ENCODE measurements at regions of chr2 and their contacts with region 1.

Region 1: GRCh38 chr2:174465327-174465726 is 21.5 kb downstream of the GPR155 start:
- DNase-seq: no peak
- H3K4me3 ChIP-seq: no peak overlapping the region
- H3K27ac ChIP-seq: no peak overlapping the region
- H3K4me1 ChIP-seq: no peaks in the 10 kb centered on the region
- H3K27me3 ChIP-seq: 0 out of 7 replicates have a peak, but pooled peaks cover 0 to 2% (median 0%) of the 10 kb centered on the region in 4 experiments
- CTCF ChIP-seq: peak; percentile 17 to 38 (median 28); a peak in 3 of 4 replicates
- EP300 ChIP-seq: no peak
- POLR2A ChIP-seq: no peak
- RAD21 ChIP-seq: peak; percentile 22 to 48; a peak in 2 of 4 replicates

Region 2: DNA sequence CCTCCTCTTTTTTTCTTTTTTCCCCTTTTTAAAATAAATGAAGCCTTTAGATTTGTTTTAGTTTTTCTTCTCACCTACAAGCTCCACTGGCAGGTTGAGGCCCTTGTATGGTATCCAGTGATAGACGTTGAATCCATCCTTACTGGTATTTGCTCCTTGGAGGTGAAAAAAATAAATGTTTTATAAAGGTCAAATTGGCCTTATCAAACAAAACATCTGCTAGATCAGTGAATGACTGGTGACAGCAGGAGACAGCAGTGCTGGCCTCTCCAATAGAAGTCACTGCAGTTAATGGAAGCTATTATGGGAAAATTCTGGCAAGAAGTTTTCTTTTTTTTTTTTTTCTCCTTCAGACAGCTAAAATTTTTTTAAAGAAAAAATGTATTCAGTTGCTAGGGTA is 143.2 kb before region 1 on chr2:
- CTCF ChIA-PET with region 1: no interaction called
- POLR2A ChIA-PET with region 1: no interaction called
- DNase-seq: no peak
- H3K4me3 ChIP-seq: no peak overlapping the region
- H3K27ac ChIP-seq: no peak overlapping the region
- H3K4me1 ChIP-seq: peaks cover 0 to 7% (median 4%) of the 10 kb centered on the region in 4 experiments; a peak in 6 of 7 replicates
- H3K27me3 ChIP-seq: peaks cover 8 to 31% (median 20%) of the 10 kb centered on the region in 4 experiments
- CTCF ChIP-seq: no peak
- EP300 ChIP-seq: no peak
- POLR2A ChIP-seq: no peak
- RAD21 ChIP-seq: no peak

Region 3: DNA sequence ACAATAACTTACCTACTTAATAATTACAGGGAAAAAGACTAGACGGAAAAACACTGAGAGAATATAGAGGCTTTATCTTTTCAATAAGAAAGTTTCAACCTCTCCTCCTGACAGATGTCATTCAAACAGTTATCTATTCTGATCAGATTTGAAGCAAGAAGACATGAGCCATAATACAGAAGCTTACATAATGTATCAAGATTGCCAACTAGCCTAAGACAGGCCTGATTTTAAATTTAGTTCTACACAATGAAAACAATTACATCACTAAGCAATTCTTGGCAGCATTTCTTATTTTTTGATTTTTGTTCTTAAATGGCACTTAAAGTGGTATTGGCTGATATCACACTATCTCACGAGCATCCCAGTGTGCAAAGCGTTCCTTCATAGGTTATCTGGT is 20.1 kb before region 1 on chr2:
- CTCF ChIA-PET with region 1: interaction called, 27 read pairs
- POLR2A ChIA-PET with region 1: interaction called, 3 read pairs
- DNase-seq: no peak
- H3K4me3 ChIP-seq: no peak overlapping the region
- H3K27ac ChIP-seq: no peak overlapping the region
- H3K4me1 ChIP-seq: no peaks in the 10 kb centered on the region
- H3K27me3 ChIP-seq: no peaks in the 10 kb centered on the region
- CTCF ChIP-seq: no peak
- EP300 ChIP-seq: no peak
- POLR2A ChIP-seq: no peak
- RAD21 ChIP-seq: no peak

Region 4: DNA sequence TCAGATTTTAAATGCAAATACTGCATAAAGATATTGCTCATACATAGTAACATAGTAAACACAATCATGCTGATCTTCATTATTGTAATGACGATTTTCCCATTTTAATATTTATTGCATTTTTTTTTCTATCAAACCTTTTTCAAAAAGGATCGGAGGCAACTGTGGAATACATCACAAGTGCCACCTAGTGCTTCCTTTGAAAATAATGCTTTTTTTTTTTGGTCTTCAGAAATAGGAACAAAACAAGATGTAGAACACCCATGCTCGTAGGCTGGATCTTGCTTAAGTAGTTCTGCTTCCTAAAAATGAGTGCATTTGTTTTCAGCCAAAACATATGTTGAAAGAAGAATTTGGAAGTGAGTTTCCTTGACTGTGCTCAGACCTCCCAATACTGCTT is 57.2 kb after region 1 on chr2:
- CTCF ChIA-PET with region 1: interaction called, 49 read pairs
- POLR2A ChIA-PET with region 1: no interaction called
- DNase-seq: no peak
- H3K4me3 ChIP-seq: no peak overlapping the region
- H3K27ac ChIP-seq: no peak overlapping the region
- H3K4me1 ChIP-seq: no peaks in the 10 kb centered on the region
- H3K27me3 ChIP-seq: no peaks in the 10 kb centered on the region
- CTCF ChIP-seq: no peak
- EP300 ChIP-seq: no peak
- POLR2A ChIP-seq: no peak
- RAD21 ChIP-seq: peak in 1 of 2 experiments; percentile 20; a peak in 2 of 4 replicates

Region 5: GRCh38 chr2:174561283-174561971 is 96.1 kb after region 1 on chr2:
- CTCF ChIA-PET with region 1: interaction called, 10 read pairs
- POLR2A ChIA-PET with region 1: no interaction called
- DNase-seq: no peak
- H3K4me3 ChIP-seq: no peak overlapping the region
- H3K27ac ChIP-seq: no peak overlapping the region
- H3K4me1 ChIP-seq: no peaks in the 10 kb centered on the region
- H3K27me3 ChIP-seq: no peaks in the 10 kb centered on the region
- CTCF ChIP-seq: no peak
- EP300 ChIP-seq: no peak
- POLR2A ChIP-seq: no peak
- RAD21 ChIP-seq: no peak

Region 6: GRCh38 chr2:174688079-174688478 is 222.8 kb after region 1 on chr2:
- CTCF ChIA-PET with region 1: interaction called, 13 read pairs
- POLR2A ChIA-PET with region 1: no interaction called
- DNase-seq: no peak
- H3K4me3 ChIP-seq: no peak overlapping the region
- H3K27ac ChIP-seq: no peak overlapping the region
- H3K4me1 ChIP-seq: peaks cover under 1 to 6% (median 2%) of the 10 kb centered on the region in 4 experiments; a peak in 4 of 7 replicates
- H3K27me3 ChIP-seq: peaks cover 0 to 11% (median 5%) of the 10 kb centered on the region in 4 experiments; a peak in 6 of 7 replicates
- CTCF ChIP-seq: no peak; a peak in 1 of 4 replicates
- EP300 ChIP-seq: no peak
- POLR2A ChIP-seq: no peak
- RAD21 ChIP-seq: no peak; a peak in 1 of 4 replicates